Calu3 (cell line): ENCODE measurements at regions of chr4 and their contacts with region 1.

Region 1: DNA sequence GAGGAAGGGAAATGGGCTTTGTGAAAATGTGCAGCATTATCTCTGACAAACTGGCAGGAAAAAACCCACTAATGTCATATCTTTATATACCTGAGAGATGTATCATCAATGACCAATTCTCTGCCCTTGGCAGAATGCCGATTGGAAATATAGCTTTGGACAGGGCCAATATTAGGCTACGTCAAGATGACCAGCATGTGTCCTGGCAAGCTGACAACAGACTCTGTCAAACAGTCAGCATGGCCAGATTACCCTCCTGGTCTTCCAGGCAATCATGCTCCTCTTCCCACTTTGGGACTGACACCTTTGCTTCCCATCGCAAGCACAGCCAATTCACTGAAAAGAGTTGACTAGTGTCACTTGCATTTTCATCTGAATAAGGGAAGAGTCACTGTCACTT is 57.0 kb downstream of the SORBS2 start:
- DNase-seq: no peak
- H3K4me3 Mint-ChIP-seq: no peak overlapping the region
- H3K27ac Mint-ChIP-seq: no peak overlapping the region
- H3K4me1 Mint-ChIP-seq: peaks cover 16% of the 10 kb centered on the region
- H3K27me3 Mint-ChIP-seq: no peaks in the 10 kb centered on the region
- CTCF ChIP-seq: no peak

Region 2: GRCh38 chr4:185708348-185708747 is 46.6 kb before region 1 on chr4:
- CTCF ChIA-PET with region 1: no interaction called
- intact Hi-C with region 1: no loop called
- DNase-seq: no peak
- H3K4me3 Mint-ChIP-seq: no peak overlapping the region
- H3K27ac Mint-ChIP-seq: no peak overlapping the region
- H3K4me1 Mint-ChIP-seq: peaks cover 33% of the 10 kb centered on the region
- H3K27me3 Mint-ChIP-seq: no peaks in the 10 kb centered on the region
- CTCF ChIP-seq: no peak

Region 3: GRCh38 chr4:185792384-185793115 is 37.6 kb after region 1 on chr4:
- CTCF ChIA-PET with region 1: no interaction called
- intact Hi-C with region 1: loop called (anchors 2 kb)
- DNase-seq: peak; percentile 60
- H3K4me3 Mint-ChIP-seq: no peak overlapping the region
- H3K27ac Mint-ChIP-seq: no peak overlapping the region
- H3K4me1 Mint-ChIP-seq: peaks cover 21% of the 10 kb centered on the region
- H3K27me3 Mint-ChIP-seq: no peaks in the 10 kb centered on the region
- CTCF ChIP-seq: no peak

Region 4: GRCh38 chr4:185886832-185887524 is 132.0 kb after region 1 on chr4:
- CTCF ChIA-PET with region 1: no interaction called
- intact Hi-C with region 1: no loop called
- DNase-seq: no peak
- H3K4me3 Mint-ChIP-seq: no peak overlapping the region
- H3K27ac Mint-ChIP-seq: no peak overlapping the region
- H3K4me1 Mint-ChIP-seq: peaks cover 3% of the 10 kb centered on the region
- H3K27me3 Mint-ChIP-seq: no peaks in the 10 kb centered on the region
- CTCF ChIP-seq: no peak